ENCODE measurements at regions of chrX and their contacts with region 1.

Region 1: GRCh38 chrX:154411322-154411980 is at the start of gene TAFAZZIN:
- DNase-seq: peak; percentile 39 to 88 (median 68)
- ATAC-seq: peak; percentile 79
- H3K4me3 ChIP-seq: peak within 1 kb of the TSS; percentile 63
- H3K4me3 Mint-ChIP-seq: peak within 1 kb of the TSS; percentile 99
- H3K27ac ChIP-seq: peak within 1 kb of the TSS; percentile 52 to 74
- H3K27ac Mint-ChIP-seq: peak within 1 kb of the TSS; percentile 95
- H3K4me1 ChIP-seq: peaks cover 21% of the 10 kb centered on the region
- H3K4me1 Mint-ChIP-seq: peaks cover 17% of the 10 kb centered on the region
- H3K27me3 ChIP-seq: no peaks in the 10 kb centered on the region
- H3K27me3 Mint-ChIP-seq: no peaks in the 10 kb centered on the region
- CTCF ChIP-seq: no peak
- total RNA-seq, gene TAFAZZIN: 72.8 to 78.5 TPM

Region 2: DNA sequence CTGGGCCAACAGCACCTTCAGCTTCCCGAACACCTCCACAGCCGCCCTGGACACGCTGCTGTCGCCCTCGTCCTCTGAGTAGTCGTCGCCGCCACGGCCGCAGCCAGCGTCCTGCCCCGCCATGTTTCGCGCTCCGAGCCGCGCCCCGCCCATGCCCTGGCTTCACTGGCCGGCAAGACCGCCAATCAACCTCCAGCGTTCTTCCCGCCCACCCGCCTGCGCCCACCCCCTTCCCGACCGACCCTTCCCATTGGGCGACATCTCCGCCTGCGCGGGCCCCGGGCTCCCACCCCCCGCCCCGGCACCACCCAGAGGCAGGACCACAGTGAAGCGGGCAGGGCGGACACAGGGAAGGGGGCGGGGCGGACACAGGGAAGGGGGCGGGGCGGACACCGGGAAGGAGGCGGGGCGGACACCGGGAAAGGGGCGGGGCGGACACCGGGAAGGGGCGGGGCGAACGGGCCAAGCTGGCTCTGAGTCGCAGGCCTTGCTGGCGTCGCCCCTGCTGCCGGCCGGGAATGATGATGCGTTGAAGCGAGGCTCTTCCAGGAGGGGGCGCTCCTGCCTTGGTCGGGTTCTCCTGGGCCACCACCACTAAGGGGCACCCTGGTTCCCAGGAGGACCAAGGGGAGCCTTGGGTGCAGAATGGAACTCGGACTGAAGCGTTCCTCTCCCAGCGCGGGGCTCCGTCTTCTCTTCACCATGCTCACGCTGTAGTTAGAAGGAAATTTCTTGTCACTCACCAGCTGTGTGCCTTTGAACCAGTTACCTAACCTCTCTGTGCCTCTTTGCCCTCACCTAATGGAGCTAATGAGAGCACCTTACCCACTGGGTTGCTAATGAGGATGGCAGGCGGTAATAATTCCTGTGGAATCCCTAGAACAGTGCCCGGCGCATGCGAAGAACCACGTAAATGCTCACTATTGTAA is 940.8 kb before region 1 on chrX and contains the start of gene HAUS7:
- CTCF ChIA-PET with region 1: no interaction called
- POLR2A ChIA-PET with region 1: no interaction called
- intact Hi-C with region 1: no loop called
- DNase-seq: peak; percentile 81 to 95 (median 86)
- ATAC-seq: peak; percentile 83
- H3K4me3 ChIP-seq: peak within 1 kb of the TSS; percentile 75
- H3K4me3 Mint-ChIP-seq: peak within 1 kb of the TSS; percentile 87
- H3K27ac ChIP-seq: peak within 1 kb of the TSS; percentile 29 to 46
- H3K27ac Mint-ChIP-seq: peak within 1 kb of the TSS; percentile 84
- H3K4me1 ChIP-seq: peaks cover 40% of the 10 kb centered on the region
- H3K4me1 Mint-ChIP-seq: peaks cover 6% of the 10 kb centered on the region
- H3K27me3 ChIP-seq: no peaks in the 10 kb centered on the region
- H3K27me3 Mint-ChIP-seq: no peaks in the 10 kb centered on the region
- CTCF ChIP-seq: peak; percentile 56
- total RNA-seq, gene HAUS7: 24.4 to 25.6 TPM

Region 3: GRCh38 chrX:154428176-154429010 is 16.9 kb after region 1 on chrX and contains the start of gene ATP6AP1:
- CTCF ChIA-PET with region 1: no interaction called
- POLR2A ChIA-PET with region 1: interaction called, 16 read pairs
- intact Hi-C with region 1: loop called in 1 of 2 experiments (anchors 1 kb)
- DNase-seq: peak; percentile 77 to 94 (median 84)
- ATAC-seq: peak; percentile 96
- H3K4me3 ChIP-seq: peak within 1 kb of the TSS; percentile 68
- H3K4me3 Mint-ChIP-seq: peak within 1 kb of the TSS; percentile 90
- H3K27ac ChIP-seq: peak within 1 kb of the TSS; percentile 58 to 70
- H3K27ac Mint-ChIP-seq: peak within 1 kb of the TSS; percentile 80
- H3K4me1 ChIP-seq: peaks cover 29% of the 10 kb centered on the region
- H3K4me1 Mint-ChIP-seq: peaks cover 30% of the 10 kb centered on the region
- H3K27me3 ChIP-seq: no peaks in the 10 kb centered on the region
- H3K27me3 Mint-ChIP-seq: no peaks in the 10 kb centered on the region
- CTCF ChIP-seq: no peak
- total RNA-seq, gene ATP6AP1: 31.4 to 40.8 TPM

Measured in CD4-positive, alpha-beta T cell (primary cell).